SK-N-SH (cell line): ENCODE measurements at regions of chr5 and their contacts with region 1.

Region 1: GRCh38 chr5:151115274-151115905 is 34.6 kb upstream of the TNIP1 start:
- DNase-seq: peak; percentile 83
- H3K4me3 ChIP-seq: no peak overlapping the region
- H3K27ac ChIP-seq: no peak overlapping the region
- H3K4me1 ChIP-seq: no peaks in the 10 kb centered on the region
- H3K27me3 ChIP-seq: no peaks in the 10 kb centered on the region
- CTCF ChIP-seq: peak; percentile 97
- EP300 ChIP-seq: no peak
- RAD21 ChIP-seq: peak; percentile 92

Region 2: GRCh38 chr5:150904479-150905318 is 210.7 kb before region 1 on chr5 and contains the start of gene ZNF300:
- CTCF ChIA-PET with region 1: no interaction called
- POLR2A ChIA-PET with region 1: no interaction called
- DNase-seq: peak; percentile 84
- H3K4me3 ChIP-seq: peak within 1 kb of the TSS; percentile 56 to 58
- H3K27ac ChIP-seq: peak within 1 kb of the TSS; percentile 69 to 94
- H3K4me1 ChIP-seq: no peaks in the 10 kb centered on the region; a peak in 1 of 4 replicates
- H3K27me3 ChIP-seq: no peaks in the 10 kb centered on the region
- CTCF ChIP-seq: no peak
- EP300 ChIP-seq: 0 out of 4 replicates have a peak, but pooled peaks of 1 of the 2 experiments have one; percentile 43
- RAD21 ChIP-seq: no peak
- polyA plus RNA-seq, gene ZNF300: 3.5 and 4.9 TPM in 2 replicates

Region 3: DNA sequence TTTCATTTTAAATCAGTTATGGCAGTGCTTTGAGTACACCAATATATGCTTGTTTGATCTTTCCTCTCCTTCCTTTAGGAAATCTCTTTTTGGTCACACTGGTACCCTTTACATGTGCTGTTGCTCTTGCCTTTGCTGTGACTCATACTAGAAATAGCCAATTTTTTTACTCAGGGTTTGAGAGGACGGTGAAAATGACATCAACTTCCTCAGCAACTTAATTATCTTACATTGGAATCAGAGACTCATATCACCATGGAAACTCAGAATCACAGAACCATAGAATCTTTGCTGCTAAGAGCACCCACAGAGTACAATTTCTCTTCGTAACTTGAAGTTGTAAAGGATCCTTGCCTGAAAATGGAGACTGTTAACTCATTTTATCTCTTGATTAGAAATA is 196.8 kb before region 1 on chr5:
- CTCF ChIA-PET with region 1: no interaction called
- POLR2A ChIA-PET with region 1: no interaction called
- DNase-seq: peak; percentile 5
- H3K4me3 ChIP-seq: no peak overlapping the region
- H3K27ac ChIP-seq: peak overlapping the region in 1 of 2 experiments; percentile 50; a peak in 2 of 4 replicates
- H3K4me1 ChIP-seq: no peaks in the 10 kb centered on the region
- H3K27me3 ChIP-seq: no peaks in the 10 kb centered on the region
- CTCF ChIP-seq: no peak
- EP300 ChIP-seq: no peak
- RAD21 ChIP-seq: no peak

Region 4: DNA sequence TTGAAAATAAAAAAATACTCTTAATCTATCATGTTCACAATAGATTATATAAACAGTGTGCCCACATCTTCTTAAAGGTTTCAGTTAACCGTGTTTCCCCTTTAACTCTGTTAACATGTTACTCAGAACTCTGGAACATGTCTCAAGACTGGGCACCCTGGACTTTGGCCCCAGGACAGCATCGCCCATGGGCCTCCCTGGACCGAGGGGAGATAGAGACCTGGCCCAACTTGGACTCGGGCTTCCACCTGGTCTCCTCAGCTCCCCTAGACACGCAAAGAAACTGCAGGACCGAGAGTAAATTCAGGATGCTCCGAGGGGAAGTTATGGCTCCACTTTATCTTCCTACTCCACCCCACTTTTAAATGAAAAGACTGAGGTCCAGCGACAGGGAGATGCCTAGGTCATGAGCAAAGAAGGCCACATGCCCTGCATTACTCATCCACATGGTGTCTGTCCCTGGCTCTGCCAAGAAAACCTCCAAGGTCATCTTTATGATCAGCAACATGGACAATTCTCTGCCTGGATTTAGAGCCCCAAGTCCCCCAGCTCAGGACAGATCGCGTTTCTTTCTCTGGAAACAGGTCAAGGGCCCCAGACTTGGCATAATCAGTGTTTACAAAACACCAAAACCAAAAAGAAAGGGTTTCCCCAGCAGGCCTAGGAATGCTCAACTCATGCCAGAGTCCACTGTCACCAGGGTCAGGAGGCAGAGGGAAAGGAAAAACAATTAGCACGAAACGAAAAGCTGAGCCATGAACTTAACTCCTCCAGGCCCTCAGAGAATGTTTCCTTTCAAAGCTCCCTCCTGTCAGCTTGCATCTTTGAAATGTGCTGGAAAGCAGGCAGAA is 77.6 kb before region 1 on chr5:
- CTCF ChIA-PET with region 1: interaction called, 19 read pairs
- POLR2A ChIA-PET with region 1: interaction called, 3 read pairs
- DNase-seq: no peak
- H3K4me3 ChIP-seq: no peak overlapping the region
- H3K27ac ChIP-seq: peak overlapping the region in 1 of 2 experiments; percentile 69; a peak in 3 of 4 replicates
- H3K4me1 ChIP-seq: peaks cover 0 to 26% of the 10 kb centered on the region in 2 experiments; a peak in 2 of 4 replicates
- H3K27me3 ChIP-seq: no peaks in the 10 kb centered on the region
- CTCF ChIP-seq: no peak
- EP300 ChIP-seq: no peak
- RAD21 ChIP-seq: no peak

Region 5: DNA sequence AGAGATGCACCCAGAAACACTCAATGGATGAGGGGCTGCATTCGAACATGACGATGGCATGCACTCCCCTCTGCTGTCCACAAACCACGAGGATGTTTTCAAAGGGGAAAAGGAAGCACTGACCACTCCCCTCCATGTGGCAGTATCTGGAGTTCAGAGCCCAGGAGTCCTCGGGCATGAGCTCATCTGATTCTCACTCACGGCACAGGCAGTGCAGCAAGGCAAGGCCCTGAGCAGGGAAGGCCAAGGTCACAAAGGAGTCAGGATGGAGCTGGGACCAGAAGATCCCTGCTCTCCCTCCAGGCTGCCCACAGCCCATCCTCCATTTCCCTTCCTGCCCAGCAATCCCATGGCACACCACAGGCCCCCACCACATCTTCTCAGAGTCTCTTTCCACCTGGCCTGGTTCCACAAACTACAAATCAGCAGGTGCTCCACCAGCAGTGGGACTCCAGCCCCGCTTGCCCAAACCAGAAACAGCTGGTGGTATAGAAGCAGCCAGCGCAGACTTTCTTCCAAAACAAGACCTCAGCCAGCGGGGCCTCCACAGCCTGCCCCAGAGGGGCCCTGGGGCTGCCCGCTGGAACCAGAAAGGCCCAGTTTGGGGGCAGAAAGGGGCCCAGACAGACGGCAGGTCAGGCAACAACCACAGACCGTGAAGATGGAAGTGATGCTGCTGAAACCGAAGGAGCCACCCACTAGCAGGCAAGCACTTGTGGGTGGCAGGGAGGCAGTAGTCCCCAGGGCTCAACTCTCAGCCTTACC is 46.8 kb before region 1 on chr5:
- CTCF ChIA-PET with region 1: interaction called, 20 read pairs
- POLR2A ChIA-PET with region 1: no interaction called
- DNase-seq: no peak
- H3K4me3 ChIP-seq: no peak overlapping the region
- H3K27ac ChIP-seq: peak overlapping the region in 1 of 2 experiments; percentile 71; a peak in 1 of 4 replicates
- H3K4me1 ChIP-seq: peaks cover 26 to 37% of the 10 kb centered on the region in 2 experiments; a peak in 3 of 4 replicates
- H3K27me3 ChIP-seq: no peaks in the 10 kb centered on the region
- CTCF ChIP-seq: no peak
- EP300 ChIP-seq: no peak
- RAD21 ChIP-seq: no peak

Region 6: GRCh38 chr5:151093476-151093889 is 21.9 kb before region 1 on chr5:
- CTCF ChIA-PET with region 1: interaction called, 20 read pairs
- POLR2A ChIA-PET with region 1: interaction called, 3 read pairs
- DNase-seq: no peak
- H3K4me3 ChIP-seq: no peak overlapping the region
- H3K27ac ChIP-seq: peak overlapping the region in 1 of 2 experiments; percentile 69; a peak in 2 of 4 replicates
- H3K4me1 ChIP-seq: peaks cover 12 to 23% of the 10 kb centered on the region in 2 experiments; a peak in 3 of 4 replicates
- H3K27me3 ChIP-seq: no peaks in the 10 kb centered on the region
- CTCF ChIP-seq: no peak
- EP300 ChIP-seq: peak in 1 of 2 experiments; percentile 64; a peak in 1 of 4 replicates
- RAD21 ChIP-seq: no peak

Region 7: GRCh38 chr5:151134238-151134637 is 18.8 kb after region 1 on chr5:
- CTCF ChIA-PET with region 1: interaction called, 116 read pairs
- POLR2A ChIA-PET with region 1: no interaction called
- DNase-seq: no peak
- H3K4me3 ChIP-seq: no peak overlapping the region
- H3K27ac ChIP-seq: no peak overlapping the region
- H3K4me1 ChIP-seq: no peaks in the 10 kb centered on the region
- H3K27me3 ChIP-seq: no peaks in the 10 kb centered on the region
- CTCF ChIP-seq: no peak
- EP300 ChIP-seq: no peak
- RAD21 ChIP-seq: no peak

Region 8: DNA sequence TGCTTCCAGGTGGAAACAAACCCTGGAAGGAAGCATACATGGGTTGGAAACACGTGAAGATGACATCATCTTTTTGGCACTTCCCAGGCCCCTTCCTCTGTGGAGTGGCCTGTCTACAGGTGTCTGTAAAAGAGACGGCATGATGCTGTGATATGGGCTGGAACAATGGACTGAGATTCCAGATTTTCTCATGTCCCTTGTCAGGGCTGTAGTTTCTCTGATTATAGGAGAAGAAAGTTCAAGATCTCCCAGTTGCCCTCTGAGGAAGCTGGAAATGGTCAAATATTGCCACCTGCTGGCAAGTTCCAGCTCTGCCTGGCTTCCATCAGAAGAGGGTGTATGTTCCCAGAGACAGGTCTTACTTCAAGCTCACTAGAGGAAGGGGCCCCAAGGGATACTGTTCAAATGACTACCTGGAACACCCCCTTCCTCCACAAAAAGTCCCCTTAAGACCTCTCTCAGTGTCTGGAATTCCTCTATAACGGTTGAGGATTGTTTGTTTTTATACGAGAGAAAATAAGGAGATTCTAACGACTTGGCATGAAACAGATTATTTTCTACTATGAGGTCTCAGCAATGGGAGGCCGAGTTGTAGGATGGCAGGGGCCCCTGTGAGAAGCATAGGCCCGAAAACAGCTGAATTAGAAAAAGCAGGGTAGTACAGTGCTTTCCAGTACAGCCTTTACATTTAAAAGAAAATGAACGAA is 49.4 kb after region 1 on chr5:
- CTCF ChIA-PET with region 1: interaction called, 540 read pairs
- POLR2A ChIA-PET with region 1: no interaction called
- DNase-seq: peak; percentile 76
- H3K4me3 ChIP-seq: peak overlapping the region in 1 of 2 experiments; percentile 34; a peak in 1 of 4 replicates
- H3K27ac ChIP-seq: no peak overlapping the region
- H3K4me1 ChIP-seq: no peaks in the 10 kb centered on the region
- H3K27me3 ChIP-seq: no peaks in the 10 kb centered on the region; the same call in 1 of the 2 replicates
- CTCF ChIP-seq: peak; percentile 93
- EP300 ChIP-seq: no peak
- RAD21 ChIP-seq: peak; percentile 97

Region 9: GRCh38 chr5:151202381-151203139 is 87.2 kb after region 1 on chr5:
- CTCF ChIA-PET with region 1: no interaction called
- POLR2A ChIA-PET with region 1: no interaction called
- DNase-seq: no peak
- H3K4me3 ChIP-seq: no peak overlapping the region
- H3K27ac ChIP-seq: no peak overlapping the region
- H3K4me1 ChIP-seq: no peaks in the 10 kb centered on the region
- H3K27me3 ChIP-seq: no peaks in the 10 kb centered on the region
- CTCF ChIP-seq: no peak
- EP300 ChIP-seq: no peak
- RAD21 ChIP-seq: no peak

Region 10: GRCh38 chr5:151298063-151298855 is 182.9 kb after region 1 on chr5:
- CTCF ChIA-PET with region 1: no interaction called
- POLR2A ChIA-PET with region 1: no interaction called
- DNase-seq: peak; percentile 56
- H3K4me3 ChIP-seq: no peak overlapping the region
- H3K27ac ChIP-seq: no peak overlapping the region
- H3K4me1 ChIP-seq: no peaks in the 10 kb centered on the region; a peak in 1 of 4 replicates
- H3K27me3 ChIP-seq: peaks cover 6% of the 10 kb centered on the region
- CTCF ChIP-seq: peak; percentile 56
- EP300 ChIP-seq: no peak
- RAD21 ChIP-seq: peak; percentile 55